ENCODE measurements at regions of chr9 and their contacts with region 1.

Region 1: GRCh38 chr9:121222524-121223171 is 21.0 kb upstream of the RAB14 start:
- DNase-seq: peak; percentile 54
- H3K4me3 ChIP-seq: no peak overlapping the region
- H3K27ac ChIP-seq: no peak overlapping the region
- H3K4me1 ChIP-seq: peaks cover 5% of the 10 kb centered on the region
- H3K27me3 ChIP-seq: no peaks in the 10 kb centered on the region
- CTCF ChIP-seq: peak; percentile 59 to 66
- POLR2A ChIP-seq: no peak

Region 2: DNA sequence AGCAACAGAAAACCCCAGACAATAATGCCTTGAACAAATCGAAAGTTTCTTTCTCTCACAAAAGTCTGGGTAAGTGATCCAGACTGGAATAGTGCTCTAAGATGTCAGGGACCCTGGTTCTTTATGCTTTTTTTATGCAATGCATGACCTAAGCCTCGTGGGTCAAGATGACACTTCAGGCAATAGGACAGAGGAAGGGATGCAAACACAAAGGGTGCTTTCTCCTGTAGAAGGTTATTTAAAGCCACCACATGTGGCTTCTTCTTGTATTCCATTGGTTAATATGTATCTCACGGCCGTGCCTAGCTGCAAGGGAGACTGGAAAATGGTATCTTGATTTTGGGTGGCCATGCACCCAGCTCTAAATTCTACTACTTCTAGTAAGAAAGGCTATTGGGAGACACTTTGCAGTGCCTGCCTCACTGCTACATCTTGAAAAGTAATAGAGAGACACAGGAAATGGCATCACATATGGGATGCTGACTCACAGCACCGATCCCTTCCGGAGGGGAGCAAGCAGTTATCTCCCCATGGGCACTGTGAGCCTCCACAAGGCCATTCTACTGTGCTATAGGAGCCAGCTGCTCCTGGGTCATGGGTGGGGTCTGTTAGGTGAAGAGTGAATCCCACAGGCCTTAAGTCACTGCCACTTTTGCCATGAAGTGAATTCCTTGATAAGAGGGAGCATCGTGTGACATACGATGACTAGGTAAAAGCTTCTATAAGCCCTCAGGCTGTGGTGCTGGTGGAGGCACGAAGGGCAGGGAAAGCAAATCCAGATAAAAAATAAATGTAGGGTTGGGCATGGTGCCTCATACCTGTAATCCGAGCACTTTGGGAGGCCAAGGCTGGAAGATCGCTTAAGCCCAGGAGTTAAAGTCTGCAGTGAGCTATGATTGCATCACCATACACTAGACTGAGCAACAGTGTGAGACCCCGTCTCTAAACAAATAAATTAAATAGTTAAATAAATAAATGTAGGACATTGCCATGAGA is 11.6 kb after region 1 on chr9:
- CTCF ChIA-PET with region 1: interaction called, 15 read pairs
- POLR2A ChIA-PET with region 1: no interaction called
- dilution Hi-C with region 1: no loop called
- intact Hi-C with region 1: no loop called
- DNase-seq: no peak
- H3K4me3 ChIP-seq: no peak overlapping the region
- H3K27ac ChIP-seq: no peak overlapping the region
- H3K4me1 ChIP-seq: peaks cover 6% of the 10 kb centered on the region
- H3K27me3 ChIP-seq: peaks cover 0 to 3% of the 10 kb centered on the region in 2 experiments
- CTCF ChIP-seq: no peak
- POLR2A ChIP-seq: no peak

Region 3: DNA sequence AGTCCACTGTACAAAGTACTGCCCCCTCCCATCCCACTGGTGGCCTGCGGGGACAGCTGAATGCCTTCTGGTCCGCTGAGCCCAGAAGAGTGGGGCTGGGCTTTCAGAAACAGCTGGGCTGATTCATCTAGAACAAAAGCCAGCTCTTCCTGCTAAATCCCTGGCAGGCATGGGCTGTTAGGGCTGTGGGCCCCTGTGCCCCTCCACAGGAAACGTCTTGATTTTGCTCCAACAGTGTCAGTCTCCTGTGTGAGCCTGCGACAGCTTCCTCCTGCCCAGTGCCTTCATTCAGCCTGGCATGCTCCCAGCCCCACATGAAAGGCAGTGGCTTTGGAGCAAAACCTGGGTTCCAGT is 38.4 kb after region 1 on chr9:
- CTCF ChIA-PET with region 1: interaction called, 16 read pairs
- POLR2A ChIA-PET with region 1: no interaction called
- dilution Hi-C with region 1: no loop called
- intact Hi-C with region 1: no loop called
- DNase-seq: peak; percentile 63
- H3K4me3 ChIP-seq: no peak overlapping the region
- H3K27ac ChIP-seq: peak overlapping the region; percentile 13
- H3K4me1 ChIP-seq: peaks cover 17% of the 10 kb centered on the region
- H3K27me3 ChIP-seq: peaks cover 0 to 5% of the 10 kb centered on the region in 2 experiments
- CTCF ChIP-seq: no peak
- POLR2A ChIP-seq: no peak

Region 4: GRCh38 chr9:121267689-121268597 is 45.3 kb after region 1 on chr9 and contains the start of gene GSN:
- CTCF ChIA-PET with region 1: interaction called, 18 read pairs
- POLR2A ChIA-PET with region 1: no interaction called
- dilution Hi-C with region 1: no loop called
- intact Hi-C with region 1: no loop called
- DNase-seq: peak; percentile 68
- H3K4me3 ChIP-seq: peak within 1 kb of the TSS; percentile 51 to 86 (median 81)
- H3K27ac ChIP-seq: no peak within 1 kb of the TSS
- H3K4me1 ChIP-seq: peaks cover 16% of the 10 kb centered on the region
- H3K27me3 ChIP-seq: peaks cover 0 to 2% of the 10 kb centered on the region in 2 experiments
- CTCF ChIP-seq: no peak
- POLR2A ChIP-seq: no peak
- total RNA-seq, gene GSN: 130 and 176 TPM in 2 replicates

Region 5: GRCh38 chr9:121305269-121305994 is 82.8 kb after region 1 on chr9:
- CTCF ChIA-PET with region 1: no interaction called
- POLR2A ChIA-PET with region 1: no interaction called
- dilution Hi-C with region 1: no loop called
- intact Hi-C with region 1: no loop called
- DNase-seq: no peak
- H3K4me3 ChIP-seq: no peak overlapping the region
- H3K27ac ChIP-seq: no peak overlapping the region
- H3K4me1 ChIP-seq: no peaks in the 10 kb centered on the region
- H3K27me3 ChIP-seq: no peaks in the 10 kb centered on the region
- CTCF ChIP-seq: no peak
- POLR2A ChIP-seq: no peak

Measured in endothelial cell of umbilical vein (primary cell).